Activated naive CD4-positive, alpha-beta T cell treated with anti-CD3 and anti-CD28 coated beads for 36 hours (primary cell): ENCODE measurements at regions of chr1 and their contacts with region 1.

Region 1: DNA sequence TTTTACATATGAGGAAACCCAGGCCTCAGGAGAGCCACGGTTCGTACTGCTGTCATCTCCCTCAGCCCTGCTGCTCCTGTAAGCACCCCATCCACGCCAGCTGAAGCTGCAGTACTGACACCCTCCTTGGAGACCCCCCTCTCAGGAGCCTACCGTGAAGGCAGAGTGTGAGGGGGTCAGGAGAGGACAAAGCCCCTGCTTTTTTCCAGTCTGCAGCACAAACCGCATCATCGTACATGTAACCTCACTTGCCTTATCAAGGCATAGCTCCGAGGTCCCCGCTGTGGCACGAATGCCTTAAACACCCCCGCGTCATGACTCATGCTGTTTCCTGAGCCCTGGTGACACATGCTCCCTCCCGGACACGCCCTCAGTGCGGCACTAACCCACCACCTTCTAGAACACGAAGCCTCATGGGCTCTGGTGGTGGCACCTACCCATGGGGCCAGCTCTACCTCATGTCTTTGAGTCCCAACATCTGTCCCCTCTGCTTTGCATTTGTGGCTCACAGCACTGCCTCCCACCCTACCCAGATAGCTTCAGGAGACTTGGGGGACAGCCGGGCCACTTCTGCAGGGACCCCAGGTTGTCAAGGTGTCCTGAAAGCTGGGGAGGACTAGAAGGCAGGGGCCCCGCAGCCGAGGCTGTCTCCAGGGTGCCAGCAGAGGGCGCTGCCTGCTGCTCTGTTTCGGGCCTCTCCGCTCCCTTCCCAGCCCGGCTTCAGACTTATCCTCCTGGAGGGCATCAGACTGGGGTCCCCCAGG is 4.9 kb downstream of the SH3BGRL3 start:
- DNase-seq: peak; percentile 96
- H3K4me3 Mint-ChIP-seq: peak overlapping the region; percentile 36
- H3K27ac Mint-ChIP-seq: peak overlapping the region; percentile 92
- H3K4me1 Mint-ChIP-seq: peaks cover 88% of the 10 kb centered on the region
- H3K27me3 Mint-ChIP-seq: no peaks in the 10 kb centered on the region

Region 2: DNA sequence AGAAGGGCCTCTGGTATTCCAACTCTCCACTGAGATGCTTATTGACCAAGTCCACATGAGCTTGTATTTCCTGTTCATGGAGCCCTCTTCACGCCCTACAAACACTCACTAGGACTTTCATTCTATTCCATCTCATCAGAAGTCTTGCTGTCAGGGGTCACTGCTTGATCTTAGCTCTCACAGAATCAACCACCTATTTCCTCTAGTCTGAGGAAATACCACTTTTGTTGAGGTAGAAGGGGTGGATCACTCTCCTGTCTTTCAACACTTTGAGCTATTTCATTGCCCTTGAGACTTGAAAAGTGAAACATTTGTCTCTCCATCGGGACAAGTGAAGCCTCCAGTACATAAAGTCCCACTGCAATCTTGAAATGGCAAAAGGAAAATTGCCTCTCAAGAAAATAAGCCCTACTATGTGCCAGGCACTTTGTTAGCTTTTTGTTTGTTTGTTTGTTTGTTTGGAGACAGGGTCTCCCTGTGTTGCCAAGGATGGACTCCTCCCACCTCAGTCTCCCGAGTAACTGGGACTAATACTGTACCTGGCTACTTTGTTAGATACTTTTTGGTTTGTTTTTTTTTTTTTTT is 145.7 kb before region 1 on chr1:
- CTCF ChIA-PET with region 1: no interaction called
- intact Hi-C with region 1: no loop called
- DNase-seq: no peak
- H3K4me3 Mint-ChIP-seq: no peak overlapping the region
- H3K27ac Mint-ChIP-seq: peak overlapping the region; percentile 39
- H3K4me1 Mint-ChIP-seq: peaks cover 9% of the 10 kb centered on the region
- H3K27me3 Mint-ChIP-seq: no peaks in the 10 kb centered on the region

Region 3: DNA sequence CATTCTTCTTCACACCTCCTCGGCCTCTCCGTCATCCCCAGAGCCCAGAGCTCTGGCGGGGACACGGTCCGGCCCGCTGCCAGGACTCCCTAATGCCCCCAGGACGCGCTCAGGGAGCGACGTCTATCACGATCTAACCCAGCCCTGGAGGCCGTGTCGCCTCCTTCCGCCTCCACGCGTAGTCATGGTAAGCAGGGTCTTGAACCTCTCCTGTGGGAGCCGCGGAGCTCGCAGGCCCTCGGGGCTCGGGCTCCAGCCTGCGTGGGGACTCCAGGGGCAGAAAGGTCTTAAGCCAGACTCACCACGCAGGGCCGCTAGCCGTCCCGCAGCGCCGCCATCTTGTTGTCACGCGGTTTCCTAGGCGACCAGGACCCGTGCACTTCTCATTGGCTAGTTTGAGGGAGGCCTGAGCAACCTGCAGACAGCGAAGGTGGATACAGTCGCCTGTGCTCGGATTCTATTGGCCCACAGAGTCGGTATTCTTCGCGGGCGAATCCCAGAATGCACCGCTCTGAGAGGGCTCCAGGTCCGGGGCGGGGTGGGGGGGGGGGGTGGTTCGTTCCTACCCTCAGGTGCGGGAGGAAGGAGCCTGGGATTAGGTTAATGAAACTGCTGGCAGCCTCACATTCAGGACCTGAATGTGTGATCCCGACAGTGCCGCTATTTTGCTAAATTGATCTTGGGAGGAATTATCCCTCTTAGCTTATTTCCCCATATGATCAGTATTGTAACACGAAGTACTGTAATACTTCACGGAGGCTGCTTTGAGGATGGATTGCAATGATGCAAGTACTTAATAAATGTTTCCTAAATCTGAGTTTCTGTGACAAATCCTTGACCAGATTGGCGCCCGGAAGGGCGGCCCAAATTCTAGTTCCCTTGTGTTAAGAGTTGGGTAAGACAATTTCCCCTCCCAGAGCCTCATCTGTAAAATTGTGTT is 21.8 kb after region 1 on chr1 and contains the start of gene UBXN11:
- CTCF ChIA-PET with region 1: interaction called, 210 read pairs
- intact Hi-C with region 1: loop called (anchors 1 kb)
- DNase-seq: peak; percentile 98
- H3K4me3 Mint-ChIP-seq: peak within 1 kb of the TSS; percentile 99
- H3K27ac Mint-ChIP-seq: peak within 1 kb of the TSS; percentile 97
- H3K4me1 Mint-ChIP-seq: peaks cover 38% of the 10 kb centered on the region
- H3K27me3 Mint-ChIP-seq: no peaks in the 10 kb centered on the region
- total RNA-seq, gene UBXN11: 26.4 to 26.9 TPM

Region 4: DNA sequence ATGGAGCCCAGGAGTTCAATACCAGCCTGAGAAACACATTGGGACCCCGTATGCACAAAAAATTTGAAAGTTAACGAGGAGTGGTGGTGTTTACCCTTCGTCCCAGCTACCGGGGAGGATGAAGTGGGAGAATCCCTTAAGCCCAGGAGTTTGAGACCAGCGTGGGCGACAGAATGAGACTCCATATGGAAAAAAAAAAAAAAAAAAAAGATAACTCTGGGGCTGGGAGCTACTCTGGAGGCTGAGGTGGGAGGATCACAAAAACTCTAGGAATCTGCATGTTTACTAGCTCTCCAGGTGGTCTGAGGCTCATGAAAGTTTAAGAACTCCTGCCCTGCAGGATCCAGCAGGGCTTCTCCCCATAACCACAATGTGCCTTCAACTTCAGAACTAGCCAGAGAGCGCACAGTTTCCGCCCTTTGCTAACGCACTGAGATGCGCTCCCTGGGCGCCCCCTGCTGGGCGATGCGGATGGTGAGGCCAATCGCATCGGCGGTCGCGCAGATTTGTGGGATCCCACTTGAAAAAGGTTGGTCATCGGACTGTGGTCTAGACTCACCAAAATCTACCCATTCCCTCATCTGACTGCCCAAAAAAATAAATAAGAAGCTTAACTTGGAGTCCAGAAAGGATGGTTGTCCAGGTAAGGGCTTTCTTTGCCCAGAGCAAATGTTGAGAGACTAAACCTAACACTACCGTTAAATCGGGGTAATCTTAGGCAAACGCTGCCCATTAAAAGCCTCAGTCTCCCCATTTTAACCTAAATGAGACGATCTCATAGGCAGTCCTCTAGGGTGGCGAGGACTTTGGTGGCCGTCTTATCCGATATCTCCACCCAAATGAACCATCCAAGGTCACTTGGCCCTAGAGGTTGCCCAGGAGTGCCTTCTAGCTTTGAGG is 79.0 kb after region 1 on chr1:
- CTCF ChIA-PET with region 1: interaction called, 6 read pairs
- intact Hi-C with region 1: loop called (anchors 1 kb)
- DNase-seq: peak; percentile 90
- H3K4me3 Mint-ChIP-seq: no peak overlapping the region
- H3K27ac Mint-ChIP-seq: no peak overlapping the region
- H3K4me1 Mint-ChIP-seq: peaks cover 32% of the 10 kb centered on the region
- H3K27me3 Mint-ChIP-seq: peaks cover 6% of the 10 kb centered on the region

Region 5: DNA sequence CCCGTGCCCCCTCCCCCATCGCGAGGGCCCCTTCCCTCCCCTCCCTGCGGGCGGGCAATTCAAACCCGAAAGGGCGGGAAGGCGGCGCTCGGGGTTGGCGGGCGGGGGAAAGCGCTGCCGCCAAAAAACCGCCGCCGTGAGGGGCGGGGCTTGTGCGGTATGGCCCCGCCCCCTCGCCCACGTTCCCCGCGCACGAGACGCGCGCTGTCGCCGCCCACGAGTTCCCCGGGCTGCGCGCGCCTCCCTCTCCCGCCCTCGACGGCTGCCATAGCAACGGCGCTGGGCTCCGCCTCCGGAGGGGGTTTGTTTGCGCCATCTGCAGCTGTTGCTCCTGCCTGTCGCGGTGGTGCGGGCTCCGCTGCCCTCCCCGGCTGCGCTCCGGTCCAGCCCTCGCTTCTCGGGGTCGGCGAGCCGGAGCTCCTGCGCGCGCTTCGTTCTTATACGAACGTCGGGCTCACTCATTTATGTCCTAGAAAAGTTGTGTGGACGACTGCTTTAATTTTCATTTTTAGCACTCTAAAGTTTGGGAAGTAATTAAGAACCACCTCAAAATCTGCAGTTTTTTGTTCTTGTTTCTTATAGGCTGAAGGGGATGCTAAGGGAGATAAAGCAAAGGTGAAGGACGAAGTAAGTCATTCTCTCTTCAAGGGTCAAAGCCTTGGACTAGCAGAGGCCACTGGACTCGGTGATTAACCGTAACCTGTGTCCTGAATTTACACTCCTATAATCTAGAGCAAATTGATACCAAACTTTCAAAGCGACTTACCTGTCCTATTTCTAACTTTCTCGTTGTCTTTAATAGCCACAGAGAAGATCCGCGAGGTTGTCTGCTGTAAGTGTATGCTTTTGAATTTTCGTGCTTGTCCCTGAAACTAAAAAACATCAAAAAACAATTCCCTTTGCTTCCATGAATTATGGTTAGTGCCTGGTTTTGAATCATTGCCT is 188.4 kb after region 1 on chr1:
- CTCF ChIA-PET with region 1: no interaction called
- intact Hi-C with region 1: loop called (anchors 5 kb)
- DNase-seq: peak; percentile 96
- H3K4me3 Mint-ChIP-seq: peak overlapping the region; percentile 87
- H3K27ac Mint-ChIP-seq: peak overlapping the region; percentile 71
- H3K4me1 Mint-ChIP-seq: peaks cover 49% of the 10 kb centered on the region
- H3K27me3 Mint-ChIP-seq: no peaks in the 10 kb centered on the region

Region 6: GRCh38 chr1:26695356-26696118 is 410.8 kb after region 1 on chr1 and contains the start of gene ARID1A:
- CTCF ChIA-PET with region 1: no interaction called
- intact Hi-C with region 1: loop called (anchors 5 kb)
- DNase-seq: peak; percentile 95
- H3K4me3 Mint-ChIP-seq: peak within 1 kb of the TSS; percentile 81
- H3K27ac Mint-ChIP-seq: peak within 1 kb of the TSS; percentile 91
- H3K4me1 Mint-ChIP-seq: peaks cover 22% of the 10 kb centered on the region
- H3K27me3 Mint-ChIP-seq: no peaks in the 10 kb centered on the region
- total RNA-seq, gene ARID1A: 65.0 to 65.9 TPM